CD4-positive, alpha-beta memory T cell (primary cell): ENCODE measurements at regions of chr1 and their contacts with region 1.

Region 1: GRCh38 chr1:203702130-203702577 is 62.8 kb upstream of the LAX1 start:
- DNase-seq: peak; percentile 46 to 68 (median 57)
- H3K4me3 ChIP-seq: no peak overlapping the region
- H3K4me3 Mint-ChIP-seq: no peak overlapping the region
- H3K27ac ChIP-seq: no peak overlapping the region
- H3K27ac Mint-ChIP-seq: peak overlapping the region; percentile 26 to 97 (median 89)
- H3K4me1 ChIP-seq: peaks cover 3% of the 10 kb centered on the region
- H3K4me1 Mint-ChIP-seq: peaks cover 5 to 15% (median 10%) of the 10 kb centered on the region in 4 donors
- H3K27me3 ChIP-seq: no peaks in the 10 kb centered on the region
- H3K27me3 Mint-ChIP-seq: no peaks in the 10 kb centered on the region

Region 2: DNA sequence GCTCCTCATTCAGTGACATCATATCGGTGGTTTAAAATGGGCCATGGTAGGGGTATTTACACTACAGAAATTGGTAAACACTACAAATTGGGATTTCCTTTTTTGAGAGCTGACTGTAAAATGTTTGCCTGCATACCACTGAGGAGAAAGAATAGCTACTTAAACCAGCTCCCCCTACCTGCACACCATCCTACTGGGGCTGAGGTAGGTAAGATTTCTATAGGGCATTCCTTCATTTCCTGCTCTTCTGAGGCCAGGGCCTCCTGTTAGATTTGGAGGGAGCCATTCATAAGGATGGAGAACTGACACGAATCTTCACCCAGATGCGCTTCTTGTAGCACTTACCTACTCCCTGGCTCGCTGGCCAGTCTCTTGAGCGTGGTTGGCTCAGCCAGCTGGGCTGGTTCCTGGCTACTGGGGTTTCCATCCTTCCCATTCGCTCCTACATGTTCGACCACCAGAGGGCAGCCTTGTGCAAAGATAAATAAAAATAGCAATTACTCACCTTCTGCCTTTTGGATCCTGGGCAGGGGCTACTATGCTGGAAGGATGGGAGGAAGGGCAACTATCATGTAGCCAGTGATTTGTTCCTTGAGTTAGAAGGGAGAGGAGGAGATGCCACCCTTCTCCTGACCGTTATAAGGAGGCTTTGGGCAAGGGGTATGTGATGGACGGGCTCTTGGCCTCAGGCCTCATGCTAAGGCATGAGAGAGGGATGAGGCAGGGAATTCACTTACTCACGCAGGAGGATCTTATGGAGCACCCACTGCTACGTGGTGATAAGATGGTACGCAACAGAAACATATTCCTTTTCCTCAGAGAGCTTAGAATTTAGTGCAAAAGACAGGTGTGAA is 197.5 kb before region 1 on chr1:
- CTCF ChIA-PET with region 1: interaction called, 96 read pairs
- POLR2A ChIA-PET with region 1: interaction called, 4 read pairs
- intact Hi-C with region 1: loop called (anchors 1 kb)
- DNase-seq: peak; percentile 60 to 70 (median 63)
- H3K4me3 ChIP-seq: no peak overlapping the region
- H3K4me3 Mint-ChIP-seq: no peak overlapping the region
- H3K27ac ChIP-seq: no peak overlapping the region
- H3K27ac Mint-ChIP-seq: peak overlapping the region in 1 of 7 donors; percentile 3
- H3K4me1 ChIP-seq: no peaks in the 10 kb centered on the region
- H3K4me1 Mint-ChIP-seq: peaks cover 0 to 7% (median 4%) of the 10 kb centered on the region in 4 donors
- H3K27me3 ChIP-seq: no peaks in the 10 kb centered on the region
- H3K27me3 Mint-ChIP-seq: no peaks in the 10 kb centered on the region

Region 3: DNA sequence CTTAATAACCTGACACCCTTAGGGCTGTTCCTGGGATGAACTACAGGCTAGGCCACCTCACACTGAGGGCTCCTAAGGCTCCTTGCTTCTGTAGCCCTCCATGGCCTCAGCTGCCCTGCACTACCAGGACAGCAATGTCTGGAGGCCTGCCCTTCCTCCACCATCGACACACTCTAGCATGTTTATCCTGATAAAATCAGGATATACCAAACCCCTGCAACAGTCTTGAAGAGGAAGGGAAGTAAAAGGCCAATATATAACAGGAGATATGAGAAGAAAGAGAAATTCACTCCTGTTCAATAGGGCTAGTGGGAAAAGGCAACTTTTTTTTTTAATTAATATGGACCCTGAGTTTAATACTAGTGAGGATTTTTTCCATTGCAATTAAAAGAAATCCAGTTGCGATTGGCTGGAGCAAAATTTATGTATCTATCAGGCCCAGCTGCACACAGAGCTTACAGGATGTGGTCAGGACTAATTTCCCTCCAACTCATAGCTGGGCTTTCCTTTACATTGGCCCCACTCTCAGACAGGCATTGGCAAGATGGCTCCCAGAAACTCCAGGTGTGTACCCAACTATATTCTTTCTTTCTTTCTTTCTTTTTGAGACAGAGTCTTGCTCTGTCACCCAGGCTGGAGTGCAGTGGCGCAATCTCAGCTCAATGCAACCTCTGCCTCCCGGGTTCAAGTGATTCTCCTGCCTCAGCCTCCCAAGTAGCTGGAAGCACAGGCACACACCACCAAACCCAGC is 89.0 kb before region 1 on chr1:
- CTCF ChIA-PET with region 1: interaction called, 16 read pairs
- POLR2A ChIA-PET with region 1: interaction called, 4 read pairs
- intact Hi-C with region 1: no loop called
- DNase-seq: no peak
- H3K4me3 ChIP-seq: no peak overlapping the region
- H3K4me3 Mint-ChIP-seq: peak overlapping the region in 5 of 8 donors; percentile 21 to 57 (median 49)
- H3K27ac ChIP-seq: no peak overlapping the region
- H3K27ac Mint-ChIP-seq: peak overlapping the region in 6 of 7 donors; percentile 41 to 73 (median 56)
- H3K4me1 ChIP-seq: peaks cover 39% of the 10 kb centered on the region
- H3K4me1 Mint-ChIP-seq: peaks cover 29 to 53% (median 39%) of the 10 kb centered on the region in 4 donors
- H3K27me3 ChIP-seq: no peaks in the 10 kb centered on the region
- H3K27me3 Mint-ChIP-seq: no peaks in the 10 kb centered on the region

Region 4: DNA sequence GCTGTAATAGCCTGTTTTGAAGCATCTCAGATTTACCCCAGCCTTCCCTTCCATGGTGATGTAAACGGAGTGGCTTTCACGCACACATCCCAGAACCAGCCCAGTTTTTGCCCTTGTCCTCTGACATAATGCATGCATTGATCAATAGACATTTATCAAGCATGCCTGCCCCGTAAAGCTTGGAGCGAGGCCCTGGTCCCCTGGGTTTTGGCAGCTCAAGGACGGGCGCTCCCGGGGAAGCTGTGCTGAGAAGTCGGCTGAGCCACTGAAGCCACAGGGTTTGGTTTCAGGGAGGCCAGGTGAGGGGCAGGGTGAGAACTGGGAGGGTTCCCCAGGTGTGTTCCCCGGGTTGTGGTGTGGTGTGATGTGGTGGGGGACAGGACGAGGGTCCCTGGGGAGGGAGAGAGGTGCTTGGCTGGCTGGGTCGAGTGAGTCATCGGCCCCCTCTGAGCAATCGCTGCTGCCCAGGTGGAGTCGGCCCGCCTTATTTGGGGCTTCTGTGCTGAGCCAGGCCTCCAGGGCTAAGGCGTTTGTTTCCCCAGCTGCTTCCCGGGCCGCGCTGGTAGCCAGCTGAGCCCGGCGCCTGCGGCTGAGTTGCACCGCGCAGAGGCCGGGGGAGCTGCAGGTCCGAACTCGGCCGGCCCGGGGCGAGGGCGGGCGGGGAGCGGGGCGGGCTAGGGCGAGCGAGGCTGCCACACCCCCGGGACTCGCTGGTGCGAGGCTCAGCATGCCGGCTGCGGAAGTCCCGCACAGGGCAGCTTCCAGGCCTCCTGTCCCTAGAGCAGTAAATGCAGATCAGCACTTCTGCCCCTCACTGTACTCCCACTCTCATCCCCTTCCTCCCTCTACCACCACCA is 51.9 kb before region 1 on chr1:
- CTCF ChIA-PET with region 1: interaction called, 15 read pairs
- POLR2A ChIA-PET with region 1: interaction called, 4 read pairs
- intact Hi-C with region 1: no loop called
- DNase-seq: peak; percentile 59 to 95 (median 67)
- H3K4me3 ChIP-seq: peak overlapping the region; percentile 13 to 54
- H3K4me3 Mint-ChIP-seq: peak overlapping the region; percentile 82 to 93 (median 88)
- H3K27ac ChIP-seq: peak overlapping the region; percentile 78
- H3K27ac Mint-ChIP-seq: peak overlapping the region; percentile 96 to 99 (median 98)
- H3K4me1 ChIP-seq: peaks cover 74% of the 10 kb centered on the region
- H3K4me1 Mint-ChIP-seq: peaks cover 50 to 81% (median 68%) of the 10 kb centered on the region in 4 donors
- H3K27me3 ChIP-seq: no peaks in the 10 kb centered on the region
- H3K27me3 Mint-ChIP-seq: no peaks in the 10 kb centered on the region

Region 5: DNA sequence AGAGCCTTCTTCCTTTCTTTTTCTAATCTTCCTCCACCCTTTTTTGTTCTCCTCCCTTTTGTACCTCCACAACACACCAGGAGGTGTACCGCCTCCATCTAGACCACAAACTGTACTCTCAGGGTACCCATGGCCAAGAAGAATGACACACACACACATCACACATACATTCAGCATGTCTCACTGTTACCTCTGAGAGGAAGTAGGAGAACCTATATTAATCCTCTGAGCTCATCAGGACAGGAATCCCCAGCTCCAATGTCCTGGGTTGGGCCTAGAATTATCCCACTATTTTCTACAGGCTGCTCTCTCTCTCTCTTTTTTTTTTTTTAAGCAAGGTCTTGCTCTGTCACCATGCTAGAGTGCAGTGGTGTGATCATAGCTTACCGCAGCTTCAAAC is 38.9 kb before region 1 on chr1:
- CTCF ChIA-PET with region 1: interaction called, 12 read pairs
- POLR2A ChIA-PET with region 1: no interaction called
- intact Hi-C with region 1: no loop called
- DNase-seq: peak in 1 of 5 donors; percentile 52
- H3K4me3 ChIP-seq: no peak overlapping the region
- H3K4me3 Mint-ChIP-seq: peak overlapping the region in 7 of 8 donors; percentile 43 to 74 (median 69)
- H3K27ac ChIP-seq: peak overlapping the region; percentile 33
- H3K27ac Mint-ChIP-seq: peak overlapping the region; percentile 79 to 95 (median 85)
- H3K4me1 ChIP-seq: peaks cover 74% of the 10 kb centered on the region
- H3K4me1 Mint-ChIP-seq: peaks cover 56 to 79% (median 68%) of the 10 kb centered on the region in 4 donors
- H3K27me3 ChIP-seq: no peaks in the 10 kb centered on the region
- H3K27me3 Mint-ChIP-seq: no peaks in the 10 kb centered on the region

Region 6: GRCh38 chr1:203682473-203683383 is 19.4 kb before region 1 on chr1:
- CTCF ChIA-PET with region 1: interaction called, 74 read pairs
- POLR2A ChIA-PET with region 1: interaction called, 6 read pairs
- intact Hi-C with region 1: no loop called
- DNase-seq: peak; percentile 85 to 93 (median 90)
- H3K4me3 ChIP-seq: peak overlapping the region in 1 of 2 donors; percentile 12
- H3K4me3 Mint-ChIP-seq: peak overlapping the region; percentile 39 to 73 (median 63)
- H3K27ac ChIP-seq: peak overlapping the region; percentile 74
- H3K27ac Mint-ChIP-seq: peak overlapping the region; percentile 89 to 99 (median 98)
- H3K4me1 ChIP-seq: peaks cover 73% of the 10 kb centered on the region
- H3K4me1 Mint-ChIP-seq: peaks cover 47 to 77% (median 62%) of the 10 kb centered on the region in 4 donors
- H3K27me3 ChIP-seq: no peaks in the 10 kb centered on the region
- H3K27me3 Mint-ChIP-seq: no peaks in the 10 kb centered on the region